ENCODE measurements at regions of chr3 and their contacts with region 1.

Region 1: GRCh38 chr3:184362668-184363540 is 1.4 kb downstream of the POLR2H start:
- DNase-seq: peak; percentile 98
- H3K4me3 ChIP-seq: peak overlapping the region; percentile 63 to 94 (median 86)
- H3K27ac ChIP-seq: peak overlapping the region; percentile 93 to 99 (median 98)
- H3K4me1 ChIP-seq: peaks cover 0 to 37% (median 34%) of the 10 kb centered on the region in 4 donors
- H3K27me3 ChIP-seq: no peaks in the 10 kb centered on the region
- CTCF ChIP-seq: peak; percentile 33 to 50 (median 44)
- EP300 ChIP-seq: no peak
- POLR2A ChIP-seq: peak; percentile 46 to 69

Region 2: DNA sequence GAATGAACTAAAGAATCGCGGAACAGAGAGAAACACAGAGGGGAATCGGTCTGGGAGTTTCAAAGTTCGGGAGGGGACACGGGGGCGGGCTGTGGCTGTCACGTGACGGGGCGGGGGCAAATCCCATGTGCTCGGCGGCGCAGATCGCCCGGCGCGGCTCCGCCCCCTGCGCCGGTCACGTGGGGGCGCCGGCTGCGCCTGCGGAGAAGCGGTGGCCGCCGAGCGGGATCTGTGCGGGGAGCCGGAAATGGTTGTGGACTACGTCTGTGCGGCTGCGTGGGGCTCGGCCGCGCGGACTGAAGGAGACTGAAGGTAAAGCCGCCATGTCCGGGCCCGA is 48.6 kb before region 1 on chr3 and contains the start of gene EIF4G1:
- intact Hi-C with region 1: loop called (anchors 2 kb)
- DNase-seq: peak; percentile 98
- H3K4me3 ChIP-seq: peak within 1 kb of the TSS; percentile 68 to 93 (median 88)
- H3K27ac ChIP-seq: peak within 1 kb of the TSS; percentile 98 to 99 (median 98)
- H3K4me1 ChIP-seq: peaks cover 0 to 45% (median 39%) of the 10 kb centered on the region in 4 donors
- H3K27me3 ChIP-seq: no peaks in the 10 kb centered on the region
- CTCF ChIP-seq: no peak
- EP300 ChIP-seq: peak in 1 of 4 donors; percentile 30
- POLR2A ChIP-seq: peak in 1 of 2 donors; percentile 27
- total RNA-seq, gene EIF4G1: 115 to 241 (median 182) TPM

Region 3: GRCh38 chr3:184496937-184497336 is 134.0 kb after region 1 on chr3:
- intact Hi-C with region 1: no loop called
- DNase-seq: no peak
- H3K4me3 ChIP-seq: no peak overlapping the region
- H3K27ac ChIP-seq: no peak overlapping the region
- H3K4me1 ChIP-seq: peaks cover 0 to 7% (median 6%) of the 10 kb centered on the region in 4 donors
- H3K27me3 ChIP-seq: peaks cover 5 to 58% (median 28%) of the 10 kb centered on the region in 3 donors
- CTCF ChIP-seq: no peak
- EP300 ChIP-seq: no peak
- POLR2A ChIP-seq: no peak

Region 4: DNA sequence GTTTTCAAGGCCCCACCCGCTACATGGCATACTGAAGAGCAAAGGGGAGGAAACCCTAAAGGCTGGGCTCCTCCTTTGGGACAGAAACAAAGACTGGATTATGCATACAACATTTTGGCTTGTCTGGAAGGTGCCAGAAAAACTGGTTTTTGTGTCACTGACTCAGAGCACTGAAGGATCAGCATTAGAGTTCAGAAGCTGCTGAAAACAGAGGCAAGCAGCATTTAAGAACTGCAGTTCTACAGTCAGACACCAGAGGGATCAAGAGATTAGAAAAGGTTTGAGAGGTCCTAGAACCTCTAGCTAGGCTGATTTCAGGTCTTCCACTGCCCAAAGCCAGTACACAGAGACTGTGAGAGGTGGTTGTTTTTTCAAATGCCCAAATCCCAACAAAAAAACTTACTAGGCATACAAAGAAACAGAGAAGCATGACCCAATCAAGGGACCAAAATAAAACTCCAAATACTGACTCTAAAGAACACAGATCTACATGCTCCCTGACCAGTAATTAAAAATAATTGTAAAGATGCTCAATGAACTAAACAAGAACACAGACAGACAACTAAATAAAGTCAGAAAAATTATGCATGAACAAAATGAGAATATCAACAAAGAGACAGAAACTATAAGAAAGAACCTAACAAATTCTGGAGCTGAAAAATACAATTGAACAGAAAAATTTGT is 1314.4 kb after region 1 on chr3:
- intact Hi-C with region 1: no loop called
- DNase-seq: no peak
- H3K4me3 ChIP-seq: no peak overlapping the region
- H3K27ac ChIP-seq: no peak overlapping the region
- H3K4me1 ChIP-seq: no peaks in the 10 kb centered on the region
- H3K27me3 ChIP-seq: no peaks in the 10 kb centered on the region
- CTCF ChIP-seq: peak in 2 of 4 experiments; percentile 26 to 40
- EP300 ChIP-seq: no peak
- POLR2A ChIP-seq: no peak

Measured in sigmoid colon (tissue), 7 donors.